GM12878 (cell line): ENCODE measurements at regions of chr5 and their contacts with region 1.

Region 1: GRCh38 chr5:97534166-97534565 is 351.1 kb upstream of the RIOK2 start:
- DNase-seq: no peak
- ATAC-seq: peak; percentile 90
- H3K4me3 ChIP-seq: no peak overlapping the region
- H3K27ac ChIP-seq: no peak overlapping the region
- H3K4me1 ChIP-seq: no peaks in the 10 kb centered on the region
- H3K27me3 ChIP-seq: no peaks in the 10 kb centered on the region
- CTCF ChIP-seq: peak; percentile 57 to 66 (median 59); a peak in 5 of 6 replicates
- EP300 ChIP-seq: no peak
- POLR2A ChIP-seq: no peak
- RAD21 ChIP-seq: peak; percentile 85

Region 2: DNA sequence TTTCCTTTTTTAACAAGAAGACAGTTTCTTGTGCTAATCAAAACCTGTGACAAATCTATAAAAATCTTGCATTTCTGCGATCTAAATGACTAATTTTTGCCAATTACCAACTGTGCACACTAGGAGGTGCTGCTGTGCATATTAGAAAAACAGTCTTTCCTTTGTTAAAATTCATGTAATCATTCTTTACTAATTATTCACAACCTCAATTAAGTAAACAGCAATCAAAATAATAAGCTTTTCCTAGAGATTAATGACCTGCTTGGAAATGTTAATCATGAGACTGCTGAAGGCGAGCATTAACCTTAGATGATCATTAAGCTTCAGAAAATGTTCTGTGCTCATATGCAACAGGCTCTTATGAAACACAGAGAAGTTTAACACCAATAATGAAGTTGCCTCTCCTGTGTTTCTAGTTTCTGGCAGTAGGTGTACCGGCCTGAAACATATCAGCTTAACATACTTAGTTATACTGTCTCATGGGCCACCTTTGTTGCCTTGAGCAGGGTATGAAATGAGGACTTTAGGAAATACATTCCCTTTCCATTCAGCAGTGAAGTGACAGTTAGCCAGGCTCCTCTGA is 1869.9 kb before region 1 on chr5:
- CTCF ChIA-PET with region 1: no interaction called
- POLR2A ChIA-PET with region 1: no interaction called
- RAD21 ChIA-PET with region 1: no interaction called
- SMC1A ChIA-PET with region 1: no interaction called
- in situ Hi-C with region 1: no loop called
- intact Hi-C with region 1: no loop called
- DNase-seq: peak; percentile 11
- ATAC-seq: peak; percentile 38; the same call in 2 of the 3 replicates
- H3K4me3 ChIP-seq: no peak overlapping the region
- H3K27ac ChIP-seq: no peak overlapping the region
- H3K4me1 ChIP-seq: no peaks in the 10 kb centered on the region
- H3K27me3 ChIP-seq: no peaks in the 10 kb centered on the region
- CTCF ChIP-seq: peak; percentile 66 to 84 (median 80)
- EP300 ChIP-seq: no peak
- POLR2A ChIP-seq: no peak
- RAD21 ChIP-seq: peak; percentile 76

Region 3: DNA sequence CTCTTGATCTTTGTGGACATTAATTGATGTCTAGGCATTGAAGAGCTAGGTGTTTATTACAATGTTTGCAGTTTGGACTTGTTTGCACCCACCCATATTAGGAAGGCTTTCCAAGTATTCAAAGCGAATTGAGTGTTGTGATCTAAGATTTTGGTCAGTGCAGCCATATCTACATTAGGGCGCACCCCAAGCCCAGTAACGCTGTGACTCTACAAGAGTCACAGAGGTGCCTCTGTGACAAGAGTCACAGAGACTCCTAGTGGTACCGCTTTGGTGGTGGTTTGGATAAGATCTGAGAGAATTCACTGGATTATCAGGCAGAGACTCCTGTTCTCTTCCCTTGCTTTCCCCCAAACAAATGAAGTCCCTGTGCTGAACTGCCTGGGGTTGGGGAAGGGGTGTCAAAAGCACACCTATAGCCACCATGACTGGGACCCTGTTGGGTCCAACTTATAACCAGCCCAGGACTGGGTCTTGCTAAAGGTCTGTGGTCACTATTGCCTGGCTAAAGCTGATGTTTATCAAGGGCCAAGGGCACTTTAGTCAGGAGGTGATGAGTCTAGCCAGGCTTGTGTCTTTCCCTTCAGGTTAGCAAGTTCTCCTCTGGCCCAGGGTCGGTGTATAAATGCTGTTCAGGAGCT is 237.0 kb before region 1 on chr5:
- CTCF ChIA-PET with region 1: interaction called, 81 read pairs
- POLR2A ChIA-PET with region 1: no interaction called
- RAD21 ChIA-PET with region 1: interaction called, 45 read pairs
- SMC1A ChIA-PET with region 1: interaction called, 68 read pairs
- in situ Hi-C with region 1: loop called (anchors 5 kb)
- intact Hi-C with region 1: loop called (anchors 1 kb)
- DNase-seq: peak; percentile 11
- ATAC-seq: peak; percentile 100
- H3K4me3 ChIP-seq: no peak overlapping the region
- H3K27ac ChIP-seq: no peak overlapping the region
- H3K4me1 ChIP-seq: no peaks in the 10 kb centered on the region
- H3K27me3 ChIP-seq: no peaks in the 10 kb centered on the region
- CTCF ChIP-seq: peak; percentile 70 to 81 (median 71)
- EP300 ChIP-seq: no peak
- POLR2A ChIP-seq: no peak
- RAD21 ChIP-seq: peak; percentile 84

Region 4: GRCh38 chr5:97418462-97418861 is 115.7 kb before region 1 on chr5:
- CTCF ChIA-PET with region 1: interaction called, 7 read pairs
- POLR2A ChIA-PET with region 1: no interaction called
- RAD21 ChIA-PET with region 1: interaction called, 12 read pairs
- SMC1A ChIA-PET with region 1: interaction called, 33 read pairs
- in situ Hi-C with region 1: no loop called
- intact Hi-C with region 1: no loop called
- DNase-seq: peak; percentile 28
- ATAC-seq: peak; percentile 93
- H3K4me3 ChIP-seq: no peak overlapping the region
- H3K27ac ChIP-seq: peak overlapping the region; percentile 6; the same call in 1 of the 2 replicates
- H3K4me1 ChIP-seq: peaks cover 18% of the 10 kb centered on the region
- H3K27me3 ChIP-seq: no peaks in the 10 kb centered on the region
- CTCF ChIP-seq: no peak
- EP300 ChIP-seq: no peak
- POLR2A ChIP-seq: no peak
- RAD21 ChIP-seq: no peak

Region 5: DNA sequence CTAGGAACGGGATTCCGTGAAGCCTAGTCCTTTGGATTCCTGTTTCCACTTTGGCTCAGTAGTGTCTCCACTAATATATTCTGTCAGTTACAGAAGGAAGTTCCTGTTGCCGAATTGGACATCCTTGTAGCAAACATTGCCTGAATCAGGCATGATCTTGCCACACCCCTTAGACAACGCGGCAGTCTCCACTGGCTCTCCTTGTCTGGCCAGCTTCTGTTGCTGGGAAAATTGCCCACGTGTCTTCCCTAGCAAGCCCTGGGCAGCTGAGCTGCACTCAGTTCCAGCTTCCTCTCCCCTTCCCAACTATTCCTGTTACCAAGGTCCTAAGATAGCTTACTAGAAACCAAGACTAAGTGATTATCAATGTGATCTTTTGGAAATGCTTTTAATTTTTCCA is 34.6 kb before region 1 on chr5:
- CTCF ChIA-PET with region 1: interaction called, 24 read pairs
- POLR2A ChIA-PET with region 1: interaction called, 3 read pairs
- RAD21 ChIA-PET with region 1: interaction called, 11 read pairs
- SMC1A ChIA-PET with region 1: interaction called, 8 read pairs
- in situ Hi-C with region 1: no loop called
- intact Hi-C with region 1: no loop called
- DNase-seq: no peak
- ATAC-seq: no peak
- H3K4me3 ChIP-seq: no peak overlapping the region
- H3K27ac ChIP-seq: no peak overlapping the region
- H3K4me1 ChIP-seq: no peaks in the 10 kb centered on the region
- H3K27me3 ChIP-seq: no peaks in the 10 kb centered on the region
- CTCF ChIP-seq: no peak
- EP300 ChIP-seq: no peak
- POLR2A ChIP-seq: no peak
- RAD21 ChIP-seq: no peak

Region 6: GRCh38 chr5:97658116-97658900 is 124.1 kb after region 1 on chr5:
- CTCF ChIA-PET with region 1: no interaction called
- POLR2A ChIA-PET with region 1: no interaction called
- RAD21 ChIA-PET with region 1: no interaction called
- SMC1A ChIA-PET with region 1: no interaction called
- in situ Hi-C with region 1: no loop called
- intact Hi-C with region 1: no loop called
- DNase-seq: no peak
- ATAC-seq: no peak
- H3K4me3 ChIP-seq: no peak overlapping the region
- H3K27ac ChIP-seq: no peak overlapping the region
- H3K4me1 ChIP-seq: no peaks in the 10 kb centered on the region
- H3K27me3 ChIP-seq: no peaks in the 10 kb centered on the region
- CTCF ChIP-seq: no peak
- EP300 ChIP-seq: no peak
- POLR2A ChIP-seq: no peak
- RAD21 ChIP-seq: no peak

Region 7: GRCh38 chr5:98773464-98774191 is 1239.5 kb after region 1 on chr5 and contains the start of gene RGMB:
- CTCF ChIA-PET with region 1: interaction called, 16 read pairs
- POLR2A ChIA-PET with region 1: no interaction called
- RAD21 ChIA-PET with region 1: no interaction called
- SMC1A ChIA-PET with region 1: interaction called, 9 read pairs
- in situ Hi-C with region 1: no loop called
- intact Hi-C with region 1: loop called (anchors 5 kb)
- DNase-seq: peak; percentile 85
- ATAC-seq: peak; percentile 89
- H3K4me3 ChIP-seq: peak within 1 kb of the TSS; percentile 93
- H3K27ac ChIP-seq: peak within 1 kb of the TSS; percentile 62
- H3K4me1 ChIP-seq: peaks cover 17% of the 10 kb centered on the region
- H3K27me3 ChIP-seq: peaks cover 2 to 5% of the 10 kb centered on the region in 2 experiments; a peak in 3 of 4 replicates
- CTCF ChIP-seq: no peak
- EP300 ChIP-seq: no peak
- POLR2A ChIP-seq: peak; percentile 86
- RAD21 ChIP-seq: no peak
- polyA plus RNA-seq, gene RGMB: 1.3 to 2.4 TPM